ENCODE measurements at regions of chr15 and their contacts with region 1.

Region 1: DNA sequence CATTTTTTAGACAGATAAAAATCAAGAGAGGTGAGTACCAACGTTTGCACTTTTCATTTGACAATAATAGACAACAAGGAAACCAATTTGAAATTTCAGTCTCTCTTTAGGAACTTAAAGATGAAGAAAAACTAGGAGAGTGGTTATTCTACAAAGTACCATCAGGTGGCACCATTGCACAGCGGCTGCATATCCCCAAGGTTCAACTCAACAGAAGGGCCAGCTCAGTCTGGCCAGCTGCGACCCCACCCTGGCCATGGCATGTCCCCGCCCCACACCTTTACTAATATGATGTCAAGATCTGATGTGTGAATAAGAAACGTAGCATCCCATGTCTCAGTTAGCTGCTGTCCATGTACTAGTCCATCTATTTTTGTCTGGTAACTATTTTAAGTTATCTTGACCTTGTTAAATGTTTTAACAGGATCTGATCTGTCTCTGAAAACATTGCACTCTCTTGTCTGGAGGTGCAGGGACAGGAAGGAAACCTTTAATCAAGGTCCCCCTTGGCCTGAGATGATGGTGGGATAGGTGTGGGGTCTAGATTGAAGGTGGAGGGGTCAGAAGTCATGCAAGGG is 35.5 kb upstream of the CGNL1 start:
- DNase-seq: peak; percentile 51
- H3K27ac ChIP-seq: no peak overlapping the region
- CTCF ChIP-seq: peak; percentile 96

Region 2: GRCh38 chr15:57527382-57528091 is 186.8 kb after region 1 on chr15:
- CTCF ChIA-PET with region 1: interaction called, 121 read pairs
- POLR2A ChIA-PET with region 1: no interaction called
- DNase-seq: peak; percentile 70
- H3K27ac ChIP-seq: no peak overlapping the region
- CTCF ChIP-seq: peak; percentile 72

Region 3: GRCh38 chr15:57541805-57542504 is 201.2 kb after region 1 on chr15:
- CTCF ChIA-PET with region 1: interaction called, 16 read pairs
- POLR2A ChIA-PET with region 1: no interaction called
- DNase-seq: peak; percentile 59
- H3K27ac ChIP-seq: no peak overlapping the region
- CTCF ChIP-seq: peak; percentile 92

Region 4: GRCh38 chr15:57640935-57641682 is 300.3 kb after region 1 on chr15:
- CTCF ChIA-PET with region 1: no interaction called
- POLR2A ChIA-PET with region 1: no interaction called
- DNase-seq: peak; percentile 71
- H3K27ac ChIP-seq: no peak overlapping the region
- CTCF ChIP-seq: peak; percentile 72

Region 5: DNA sequence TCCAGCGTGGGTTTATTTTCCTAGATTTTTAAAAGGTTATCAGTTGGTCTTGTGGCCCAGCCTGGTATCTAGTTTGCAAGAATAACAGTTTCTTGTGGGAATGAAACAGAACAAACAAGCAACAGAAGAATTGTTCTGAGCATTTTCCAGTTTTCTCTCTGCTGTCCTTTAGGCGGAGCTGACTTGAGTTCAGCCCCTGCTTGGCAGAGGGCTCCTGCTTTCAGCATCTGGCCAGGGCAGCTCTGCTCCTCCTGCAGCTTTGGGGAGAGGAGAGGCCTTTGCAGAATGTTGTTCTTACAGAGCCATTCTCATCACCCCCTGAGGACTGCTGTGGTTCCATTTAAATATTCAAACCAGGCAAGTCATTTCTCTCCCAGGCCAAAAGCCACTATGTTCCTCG is 607.0 kb after region 1 on chr15:
- CTCF ChIA-PET with region 1: no interaction called
- POLR2A ChIA-PET with region 1: no interaction called
- DNase-seq: no peak
- H3K27ac ChIP-seq: no peak overlapping the region
- CTCF ChIP-seq: no peak

Measured in RWPE1 (cell line).